GM10248 (cell line): ENCODE measurements at regions of chr1 and their contacts with region 1.

Region 1: GRCh38 chr1:27010989-27011764 is 1.5 kb downstream of the TENT5B start:
- DNase-seq: no peak
- CTCF ChIP-seq: no peak

Region 2: GRCh38 chr1:26993237-26994019 is 17.7 kb before region 1 on chr1 and contains the start of gene TRNP1:
- CTCF ChIA-PET with region 1: interaction called, 34 read pairs
- POLR2A ChIA-PET with region 1: no interaction called
- DNase-seq: peak; percentile 94
- CTCF ChIP-seq: no peak

Region 3: DNA sequence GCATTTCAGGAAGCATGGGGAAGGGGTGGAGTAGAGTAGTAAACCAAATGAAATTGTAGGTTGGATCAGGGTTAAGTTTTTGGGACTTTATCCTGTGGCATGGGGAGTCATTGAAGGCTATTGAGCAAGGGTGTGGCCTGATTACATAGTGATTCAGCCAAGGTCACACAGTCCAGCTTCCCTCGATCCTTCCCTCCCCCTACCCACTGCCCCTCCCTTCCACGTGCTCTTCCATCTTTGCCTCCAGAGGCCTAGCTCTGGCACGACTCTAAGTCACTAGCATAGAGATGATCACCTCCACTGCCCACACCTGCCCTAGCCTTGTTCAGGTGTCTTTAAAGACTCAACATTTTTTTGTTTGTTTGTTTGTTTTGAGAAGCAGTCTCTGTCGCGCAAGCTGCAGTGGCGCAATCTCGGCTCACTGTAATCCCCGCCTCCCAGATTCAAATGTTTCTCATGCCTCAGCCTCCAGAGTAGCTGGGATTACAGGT is 180.9 kb after region 1 on chr1:
- CTCF ChIA-PET with region 1: no interaction called
- POLR2A ChIA-PET with region 1: no interaction called
- DNase-seq: no peak
- CTCF ChIP-seq: no peak